ENCODE measurements at regions of chr9 and their contacts with region 1.

Region 1: GRCh38 chr9:137672907-137673791 is 54.3 kb downstream of the EHMT1 start:
- DNase-seq: peak; percentile 58
- H3K4me3 ChIP-seq: no peak overlapping the region
- H3K27ac ChIP-seq: no peak overlapping the region
- H3K4me1 ChIP-seq: no peaks in the 10 kb centered on the region
- H3K27me3 ChIP-seq: no peaks in the 10 kb centered on the region
- CTCF ChIP-seq: peak; percentile 72 to 85
- POLR2A ChIP-seq: no peak

Region 2: GRCh38 chr9:137007108-137007815 is 665.9 kb before region 1 on chr9:
- CTCF ChIA-PET with region 1: no interaction called
- POLR2A ChIA-PET with region 1: no interaction called
- dilution Hi-C with region 1: no loop called
- intact Hi-C with region 1: no loop called
- DNase-seq: no peak
- H3K4me3 ChIP-seq: no peak overlapping the region
- H3K27ac ChIP-seq: no peak overlapping the region
- H3K4me1 ChIP-seq: no peaks in the 10 kb centered on the region
- H3K27me3 ChIP-seq: no peaks in the 10 kb centered on the region
- CTCF ChIP-seq: no peak
- POLR2A ChIP-seq: no peak

Region 3: GRCh38 chr9:137618105-137619067 is 54.8 kb before region 1 on chr9 and contains the start of gene EHMT1:
- CTCF ChIA-PET with region 1: interaction called, 10 read pairs
- POLR2A ChIA-PET with region 1: no interaction called
- dilution Hi-C with region 1: no loop called
- intact Hi-C with region 1: loop called (anchors 5 kb)
- DNase-seq: peak; percentile 83
- H3K4me3 ChIP-seq: peak within 1 kb of the TSS; percentile 72 to 82 (median 73)
- H3K27ac ChIP-seq: peak within 1 kb of the TSS; percentile 58
- H3K4me1 ChIP-seq: peaks cover 22% of the 10 kb centered on the region
- H3K27me3 ChIP-seq: no peaks in the 10 kb centered on the region
- CTCF ChIP-seq: no peak
- POLR2A ChIP-seq: peak; percentile 88
- total RNA-seq, gene EHMT1: 103 and 104 TPM in 2 replicates

Region 4: DNA sequence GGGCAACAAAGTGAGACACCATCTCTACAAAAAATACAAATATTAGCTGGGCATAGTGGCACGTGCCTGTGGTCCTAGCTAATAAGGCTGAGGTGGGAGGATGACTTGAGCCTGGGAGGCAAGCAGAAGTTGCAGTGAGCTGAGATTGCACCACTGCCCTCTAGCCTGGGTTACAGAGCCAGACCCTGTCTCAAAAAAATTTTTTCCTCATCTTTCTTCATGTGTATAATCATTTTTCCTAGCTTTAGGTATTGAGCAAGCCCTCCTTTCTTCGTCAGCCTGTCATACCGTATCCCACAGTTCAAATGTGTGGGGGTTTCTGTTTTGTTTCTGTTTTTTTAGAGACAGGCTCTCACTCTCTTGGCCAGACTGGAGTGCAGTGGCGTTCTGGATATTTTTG is 13.0 kb before region 1 on chr9:
- CTCF ChIA-PET with region 1: interaction called, 12 read pairs
- POLR2A ChIA-PET with region 1: no interaction called
- dilution Hi-C with region 1: no loop called
- intact Hi-C with region 1: no loop called
- DNase-seq: no peak
- H3K4me3 ChIP-seq: no peak overlapping the region
- H3K27ac ChIP-seq: no peak overlapping the region
- H3K4me1 ChIP-seq: no peaks in the 10 kb centered on the region
- H3K27me3 ChIP-seq: no peaks in the 10 kb centered on the region
- CTCF ChIP-seq: no peak
- POLR2A ChIP-seq: no peak

Region 5: DNA sequence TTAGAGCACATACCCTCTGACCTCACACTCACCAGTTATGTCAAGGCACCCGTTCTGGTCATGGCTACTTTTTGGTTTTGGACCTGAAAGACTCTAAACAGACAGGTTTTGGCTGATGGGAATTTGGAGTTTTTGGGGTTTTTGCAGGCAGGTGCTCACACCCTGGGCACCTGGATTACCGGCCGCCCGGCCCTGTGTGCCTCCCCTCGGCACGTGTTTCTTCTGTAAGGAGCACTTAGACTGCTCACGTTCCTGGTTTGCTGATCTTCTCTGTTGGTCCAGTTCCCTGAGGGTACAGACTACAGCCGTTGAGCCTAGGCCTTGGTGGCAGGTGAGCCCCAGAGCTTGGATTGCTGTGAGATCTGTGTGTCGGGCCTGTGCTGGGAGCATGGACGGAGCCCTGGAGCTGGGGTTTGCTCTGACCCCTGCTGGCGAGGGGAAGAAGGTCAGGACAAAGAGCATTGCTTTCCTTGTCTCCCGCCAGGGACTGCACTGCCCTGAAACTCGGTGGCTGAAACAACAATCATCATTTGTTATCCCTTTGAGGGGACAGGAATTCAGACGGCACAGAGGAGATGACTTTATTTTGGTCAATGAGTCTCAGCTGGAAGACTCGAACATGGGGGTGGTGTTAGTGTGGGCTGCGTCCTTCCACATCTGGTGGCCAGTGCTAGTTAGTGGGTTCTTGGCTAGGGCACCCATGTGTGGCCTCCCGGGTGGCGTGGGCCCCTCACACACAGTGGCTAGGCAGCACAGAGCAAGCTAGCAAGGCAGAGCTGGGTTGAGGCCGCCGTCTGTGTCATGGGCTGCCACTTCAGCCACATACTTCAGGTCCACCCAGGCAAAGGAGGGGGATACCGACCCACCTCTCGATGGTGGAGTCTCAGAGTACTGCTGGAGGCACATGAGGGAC is 22.1 kb after region 1 on chr9:
- CTCF ChIA-PET with region 1: interaction called, 35 read pairs
- POLR2A ChIA-PET with region 1: no interaction called
- dilution Hi-C with region 1: no loop called
- intact Hi-C with region 1: loop called (anchors 1 kb)
- DNase-seq: peak; percentile 39
- H3K4me3 ChIP-seq: no peak overlapping the region
- H3K27ac ChIP-seq: no peak overlapping the region
- H3K4me1 ChIP-seq: peaks cover 7% of the 10 kb centered on the region
- H3K27me3 ChIP-seq: no peaks in the 10 kb centered on the region
- CTCF ChIP-seq: peak; percentile 65 to 79
- POLR2A ChIP-seq: no peak

Region 6: DNA sequence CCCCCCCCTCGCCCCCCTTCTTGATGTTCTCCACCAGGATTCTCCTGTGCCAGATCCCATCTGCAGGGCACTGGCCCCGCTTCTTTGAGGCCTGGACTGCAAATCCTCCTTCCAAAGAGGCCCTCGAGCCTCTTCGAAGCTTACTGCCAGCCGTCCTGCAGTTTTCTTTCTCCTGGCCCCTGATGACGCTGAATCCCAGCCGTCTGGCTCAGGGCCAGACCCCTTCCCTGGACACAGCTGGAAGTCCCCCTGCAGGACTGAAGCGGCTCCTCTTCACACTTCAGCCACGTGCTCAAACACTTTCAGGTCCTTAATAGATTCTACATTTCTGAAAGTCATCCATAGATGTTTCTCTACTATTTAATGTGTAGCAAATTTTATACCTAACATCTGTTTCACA is 67.2 kb after region 1 on chr9:
- CTCF ChIA-PET with region 1: interaction called, 13 read pairs
- POLR2A ChIA-PET with region 1: no interaction called
- dilution Hi-C with region 1: no loop called
- intact Hi-C with region 1: no loop called
- DNase-seq: no peak
- H3K4me3 ChIP-seq: no peak overlapping the region
- H3K27ac ChIP-seq: no peak overlapping the region
- H3K4me1 ChIP-seq: no peaks in the 10 kb centered on the region
- H3K27me3 ChIP-seq: no peaks in the 10 kb centered on the region
- CTCF ChIP-seq: no peak
- POLR2A ChIP-seq: no peak

Region 7: GRCh38 chr9:137757613-137758029 is 84.5 kb after region 1 on chr9:
- CTCF ChIA-PET with region 1: interaction called, 10 read pairs
- POLR2A ChIA-PET with region 1: no interaction called
- dilution Hi-C with region 1: no loop called
- intact Hi-C with region 1: loop called (anchors 10 kb)
- DNase-seq: no peak
- H3K4me3 ChIP-seq: no peak overlapping the region
- H3K27ac ChIP-seq: no peak overlapping the region
- H3K4me1 ChIP-seq: no peaks in the 10 kb centered on the region
- H3K27me3 ChIP-seq: no peaks in the 10 kb centered on the region
- CTCF ChIP-seq: no peak
- POLR2A ChIP-seq: no peak

Region 8: DNA sequence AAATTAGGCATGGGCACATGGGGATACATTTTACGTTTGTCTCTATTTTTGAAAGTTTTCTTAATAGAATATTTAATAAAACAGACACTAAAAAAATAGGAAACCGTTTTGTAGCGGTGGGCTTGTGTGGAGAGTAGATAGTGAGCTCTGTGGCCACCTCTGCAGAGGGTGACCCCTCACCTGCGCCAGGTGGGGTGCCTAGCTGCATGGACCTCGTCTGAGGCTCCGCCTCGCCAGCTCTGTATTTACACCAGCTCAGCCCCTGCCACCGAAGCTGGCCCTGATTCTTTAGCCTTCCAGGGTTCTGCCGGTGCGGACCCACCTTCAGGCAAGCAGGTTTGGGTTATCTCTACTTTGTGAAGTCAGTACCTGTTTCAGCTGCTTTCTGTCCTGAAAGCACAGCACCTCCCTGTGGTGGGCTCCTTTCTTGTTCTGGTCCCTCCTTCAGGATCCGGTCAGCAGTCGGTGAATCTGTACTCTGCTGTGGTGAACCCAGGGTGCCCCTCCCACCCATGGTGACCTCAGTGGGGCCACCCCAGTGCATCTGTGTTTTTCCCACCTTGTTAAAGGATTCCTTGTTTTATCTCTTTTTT is 99.2 kb after region 1 on chr9:
- CTCF ChIA-PET with region 1: interaction called, 10 read pairs
- POLR2A ChIA-PET with region 1: no interaction called
- dilution Hi-C with region 1: no loop called
- intact Hi-C with region 1: no loop called
- DNase-seq: no peak
- H3K4me3 ChIP-seq: no peak overlapping the region
- H3K27ac ChIP-seq: no peak overlapping the region
- H3K4me1 ChIP-seq: no peaks in the 10 kb centered on the region
- H3K27me3 ChIP-seq: no peaks in the 10 kb centered on the region
- CTCF ChIP-seq: peak in 1 of 2 donors; percentile 10
- POLR2A ChIP-seq: no peak